AG04449 (cell line): ENCODE measurements at regions of chr3 and their contacts with region 1.

Region 1: GRCh38 chr3:129490242-129491045 is 38.0 kb upstream of the RHO start:
- DNase-seq: peak; percentile 76
- H3K4me3 ChIP-seq: no peak overlapping the region
- CTCF ChIP-seq: peak; percentile 87

Region 2: DNA sequence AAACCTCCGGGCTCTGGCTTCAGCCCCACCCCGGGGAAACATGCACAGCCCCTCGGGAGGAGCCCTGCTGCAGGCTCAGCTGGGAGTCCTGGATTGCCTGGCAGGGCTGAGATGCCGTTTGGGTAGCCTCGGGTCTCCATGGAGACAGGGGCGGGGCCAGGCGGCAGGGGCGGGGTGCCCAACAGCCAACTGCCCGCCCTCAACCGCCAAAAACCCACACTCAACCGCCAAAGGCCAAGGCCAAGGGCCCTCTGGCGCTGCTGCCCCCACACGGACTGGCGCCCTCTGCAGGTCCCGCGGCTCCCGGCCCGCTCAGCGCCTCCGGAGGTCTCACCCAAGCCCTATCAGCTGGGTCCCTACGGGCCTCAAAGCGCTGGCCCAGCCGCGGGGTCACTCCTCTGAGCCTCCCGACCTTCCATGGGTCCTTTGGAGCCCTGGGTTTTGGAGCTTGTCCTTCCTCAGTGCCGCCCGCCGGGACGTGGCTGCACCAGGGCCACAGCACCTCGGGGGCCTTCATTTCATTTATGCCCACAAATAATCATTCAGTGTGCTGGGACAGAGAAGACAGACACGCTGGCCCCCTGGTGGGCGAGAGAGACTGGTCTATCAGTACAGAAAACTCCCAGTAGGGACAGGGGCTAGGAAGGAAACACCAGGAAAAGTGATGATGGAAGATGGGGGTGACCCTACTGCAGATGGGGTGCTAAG is 644.5 kb before region 1 on chr3:
- CTCF ChIA-PET with region 1: no interaction called
- POLR2A ChIA-PET with region 1: no interaction called
- DNase-seq: no peak
- H3K4me3 ChIP-seq: peak overlapping the region; percentile 48
- CTCF ChIP-seq: peak; percentile 66

Region 3: GRCh38 chr3:129026728-129027543 is 463.5 kb before region 1 on chr3:
- CTCF ChIA-PET with region 1: no interaction called
- POLR2A ChIA-PET with region 1: no interaction called
- DNase-seq: no peak
- H3K4me3 ChIP-seq: peak overlapping the region; percentile 30
- CTCF ChIP-seq: peak; percentile 21

Region 4: DNA sequence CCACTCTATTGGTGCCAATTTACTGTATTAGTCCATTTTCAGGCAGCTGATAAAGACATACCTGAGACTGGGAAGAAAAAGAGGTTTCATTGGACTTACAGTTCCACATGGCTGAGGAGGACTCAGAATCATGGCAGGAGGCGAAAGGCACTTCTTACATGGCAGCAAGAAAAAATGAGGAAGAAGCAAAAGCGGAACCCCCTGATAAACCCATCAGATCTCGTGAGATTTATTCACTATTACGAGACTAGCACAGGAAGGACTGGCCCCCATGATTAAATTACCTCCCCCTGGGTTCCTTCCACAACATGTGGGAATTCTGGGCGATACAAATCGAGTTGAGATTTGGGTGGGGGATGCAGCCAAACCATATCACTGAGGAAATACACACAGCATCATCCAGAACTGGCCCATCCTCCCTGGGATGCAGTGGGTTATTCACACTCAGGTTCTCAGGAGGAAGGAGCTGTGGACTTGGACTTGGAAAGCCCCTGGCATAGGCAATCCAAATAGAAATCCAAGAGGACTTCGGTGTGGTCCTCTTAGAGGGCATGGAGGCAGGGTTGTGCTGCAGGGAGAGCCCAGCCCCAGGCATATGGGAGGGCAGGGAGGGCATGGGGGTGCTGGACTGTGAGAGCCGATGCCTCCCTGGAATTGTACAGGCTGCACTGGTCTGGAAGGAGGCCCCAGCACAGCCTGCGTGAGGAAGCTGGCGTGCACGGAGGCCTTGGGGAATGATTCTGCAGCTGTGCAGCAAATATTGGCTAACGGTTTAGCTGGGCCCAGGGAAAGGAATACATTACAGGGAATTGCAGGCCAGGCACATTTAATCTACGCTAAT is 124.9 kb before region 1 on chr3:
- CTCF ChIA-PET with region 1: no interaction called
- POLR2A ChIA-PET with region 1: no interaction called
- DNase-seq: no peak
- H3K4me3 ChIP-seq: no peak overlapping the region
- CTCF ChIP-seq: no peak

Region 5: GRCh38 chr3:129596194-129597086 is 106.0 kb after region 1 on chr3:
- CTCF ChIA-PET with region 1: interaction called, 13 read pairs
- POLR2A ChIA-PET with region 1: interaction called, 4 read pairs
- DNase-seq: peak; percentile 81
- H3K4me3 ChIP-seq: peak overlapping the region; percentile 29
- CTCF ChIP-seq: no peak

Region 6: DNA sequence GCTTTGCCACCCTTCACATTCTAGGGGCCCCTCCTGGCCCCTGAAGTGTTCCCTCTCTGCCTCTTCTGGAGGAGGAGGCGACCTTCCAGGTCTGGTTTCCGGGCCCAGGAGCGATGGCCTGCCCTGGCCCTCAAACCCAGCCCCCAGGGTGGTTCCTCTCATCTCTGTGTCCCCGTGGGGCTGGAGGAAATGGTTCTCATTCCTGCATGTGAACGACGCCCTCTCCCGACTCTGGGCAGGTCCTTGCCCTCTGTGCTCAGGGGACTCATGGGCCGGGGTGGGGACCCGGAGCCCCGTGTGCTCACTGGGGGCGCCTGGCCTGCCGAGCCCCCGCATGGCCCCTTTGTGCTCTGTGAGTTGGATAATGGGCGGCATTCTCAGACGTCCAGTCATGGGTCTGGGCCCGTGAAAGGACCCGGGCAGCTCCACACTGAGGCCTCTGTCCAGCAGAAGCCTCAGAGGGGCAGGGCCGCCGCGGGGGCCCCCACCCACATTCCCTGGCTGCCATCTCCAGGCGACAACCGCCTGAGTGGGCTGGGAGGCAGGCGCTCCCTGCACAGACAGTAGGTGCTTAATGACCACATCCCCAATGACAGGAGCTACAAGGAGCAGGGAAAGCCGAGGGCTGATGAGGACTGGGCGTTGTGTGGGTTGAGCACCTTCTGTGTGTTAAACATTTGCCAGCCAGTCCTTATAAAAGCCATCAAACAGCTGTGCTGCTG is 121.5 kb after region 1 on chr3:
- CTCF ChIA-PET with region 1: interaction called, 24 read pairs
- POLR2A ChIA-PET with region 1: no interaction called
- DNase-seq: no peak
- H3K4me3 ChIP-seq: no peak overlapping the region
- CTCF ChIP-seq: no peak

Region 7: DNA sequence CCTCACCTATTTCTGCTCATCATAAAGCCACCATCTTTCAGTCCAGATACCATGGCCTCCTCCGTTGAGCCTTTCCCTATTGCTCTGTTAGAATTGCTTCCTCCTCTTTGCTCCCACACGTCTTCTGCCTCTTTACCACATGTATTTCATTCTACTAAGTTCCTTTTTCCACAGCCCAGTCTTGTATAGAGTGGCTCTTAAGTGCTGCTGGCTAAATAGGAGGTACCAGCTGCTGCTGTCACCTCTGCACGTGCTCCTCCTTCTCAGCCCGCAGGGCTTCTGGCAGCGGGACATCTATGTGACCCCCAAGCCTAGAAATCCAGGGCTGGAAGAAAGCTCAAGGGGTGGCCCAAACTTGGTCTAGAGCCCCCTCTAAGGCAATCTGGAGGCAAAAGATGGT is 154.8 kb after region 1 on chr3:
- CTCF ChIA-PET with region 1: interaction called, 13 read pairs
- POLR2A ChIA-PET with region 1: no interaction called
- DNase-seq: no peak
- H3K4me3 ChIP-seq: no peak overlapping the region
- CTCF ChIP-seq: no peak

Region 8: GRCh38 chr3:129824926-129825541 is 334.6 kb after region 1 on chr3:
- CTCF ChIA-PET with region 1: interaction called, 164 read pairs
- POLR2A ChIA-PET with region 1: no interaction called
- DNase-seq: no peak
- H3K4me3 ChIP-seq: no peak overlapping the region
- CTCF ChIP-seq: peak; percentile 45